GM12878 (cell line): ENCODE measurements at regions of chr14 and their contacts with region 1.

Region 1: DNA sequence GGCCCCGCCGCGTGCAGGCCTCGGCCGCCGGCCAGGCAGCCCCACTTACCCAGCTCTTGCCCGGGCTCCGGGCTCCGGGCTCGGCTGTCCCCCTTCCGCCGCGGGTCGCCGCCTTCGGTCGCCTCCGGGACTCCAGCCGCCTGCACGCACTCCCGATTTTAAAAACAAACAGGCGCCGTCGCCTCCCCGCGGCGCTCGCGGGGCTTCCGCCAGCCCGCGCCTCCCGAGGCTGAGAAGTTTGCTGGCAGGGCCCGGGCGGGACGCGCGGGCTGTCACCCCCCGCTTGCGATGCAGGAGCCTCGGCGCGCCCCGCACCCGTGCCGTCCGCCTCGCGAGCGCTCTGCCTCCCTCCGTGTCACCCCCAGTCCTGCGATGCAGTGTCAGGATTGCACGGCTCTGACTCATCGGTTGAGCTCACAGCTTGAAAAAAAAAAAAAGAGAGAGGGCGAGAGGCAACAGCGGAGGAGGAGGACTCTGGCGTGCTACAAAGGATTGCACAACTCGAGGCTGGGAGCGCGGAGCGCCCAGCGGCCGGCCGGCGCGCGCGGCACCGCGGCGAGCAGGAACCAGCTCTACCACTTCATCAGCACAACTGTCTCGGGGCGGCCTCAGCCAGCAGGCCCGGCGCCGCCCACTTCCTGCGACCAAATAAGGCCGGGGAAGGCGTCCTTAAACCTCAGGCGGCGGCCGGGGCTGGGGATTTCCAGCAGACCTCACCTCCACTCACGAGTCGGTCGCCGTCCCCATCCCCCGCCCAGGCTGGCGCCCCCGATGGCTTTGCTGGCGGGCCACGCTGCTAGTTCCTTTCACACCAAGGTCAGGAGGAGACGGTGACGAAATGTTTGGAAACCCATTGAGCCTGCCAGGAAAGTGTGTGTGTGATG is 45.8 kb upstream of the PNMA1 start:
- DNase-seq: peak; percentile 66
- ATAC-seq: peak; percentile 71
- H3K4me3 ChIP-seq: peak overlapping the region; percentile 83
- H3K27ac ChIP-seq: peak overlapping the region; percentile 100
- H3K4me1 ChIP-seq: peaks cover 63% of the 10 kb centered on the region
- H3K27me3 ChIP-seq: no peaks in the 10 kb centered on the region
- CTCF ChIP-seq: peak in 1 of 3 experiments; percentile 7; a peak in 1 of 6 replicates
- EP300 ChIP-seq: peak; percentile 48 to 58; a peak in 2 of 4 replicates
- POLR2A ChIP-seq: peak; percentile 97
- RAD21 ChIP-seq: no peak

Region 2: DNA sequence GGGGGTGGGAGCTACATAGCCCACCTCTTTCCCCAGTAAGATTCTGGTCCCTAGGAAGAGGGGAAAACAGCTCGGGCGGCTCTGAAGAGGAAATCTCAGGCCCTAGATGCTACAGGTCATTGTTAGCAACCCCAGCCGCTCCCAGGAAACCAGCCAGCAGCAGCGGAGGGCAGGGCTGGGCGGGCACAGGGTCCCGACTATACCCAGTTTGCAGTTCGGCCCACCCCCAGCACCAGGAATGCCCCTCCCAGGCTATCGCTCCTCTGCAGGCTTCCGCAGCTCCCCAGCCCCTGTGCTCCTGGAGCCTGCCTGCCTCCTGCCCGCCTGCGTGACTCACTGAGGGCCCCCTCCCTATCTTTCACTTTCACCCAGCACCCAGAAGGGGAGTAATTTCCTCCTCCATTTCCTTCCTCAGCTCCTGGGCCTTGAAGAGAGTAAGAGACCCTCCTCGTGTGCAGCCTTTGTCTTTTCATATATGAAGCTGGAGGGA is 18.5 kb before region 1 on chr14:
- CTCF ChIA-PET with region 1: interaction called, 95 read pairs
- POLR2A ChIA-PET with region 1: interaction called, 54 read pairs
- RAD21 ChIA-PET with region 1: interaction called, 114 read pairs
- SMC1A ChIA-PET with region 1: interaction called, 60 read pairs
- in situ Hi-C with region 1: no loop called
- intact Hi-C with region 1: no loop called
- DNase-seq: no peak
- ATAC-seq: peak; percentile 60
- H3K4me3 ChIP-seq: peak overlapping the region; percentile 55
- H3K27ac ChIP-seq: peak overlapping the region; percentile 81
- H3K4me1 ChIP-seq: peaks cover 55% of the 10 kb centered on the region
- H3K27me3 ChIP-seq: no peaks in the 10 kb centered on the region
- CTCF ChIP-seq: no peak
- EP300 ChIP-seq: no peak
- POLR2A ChIP-seq: no peak
- RAD21 ChIP-seq: no peak

Region 3: DNA sequence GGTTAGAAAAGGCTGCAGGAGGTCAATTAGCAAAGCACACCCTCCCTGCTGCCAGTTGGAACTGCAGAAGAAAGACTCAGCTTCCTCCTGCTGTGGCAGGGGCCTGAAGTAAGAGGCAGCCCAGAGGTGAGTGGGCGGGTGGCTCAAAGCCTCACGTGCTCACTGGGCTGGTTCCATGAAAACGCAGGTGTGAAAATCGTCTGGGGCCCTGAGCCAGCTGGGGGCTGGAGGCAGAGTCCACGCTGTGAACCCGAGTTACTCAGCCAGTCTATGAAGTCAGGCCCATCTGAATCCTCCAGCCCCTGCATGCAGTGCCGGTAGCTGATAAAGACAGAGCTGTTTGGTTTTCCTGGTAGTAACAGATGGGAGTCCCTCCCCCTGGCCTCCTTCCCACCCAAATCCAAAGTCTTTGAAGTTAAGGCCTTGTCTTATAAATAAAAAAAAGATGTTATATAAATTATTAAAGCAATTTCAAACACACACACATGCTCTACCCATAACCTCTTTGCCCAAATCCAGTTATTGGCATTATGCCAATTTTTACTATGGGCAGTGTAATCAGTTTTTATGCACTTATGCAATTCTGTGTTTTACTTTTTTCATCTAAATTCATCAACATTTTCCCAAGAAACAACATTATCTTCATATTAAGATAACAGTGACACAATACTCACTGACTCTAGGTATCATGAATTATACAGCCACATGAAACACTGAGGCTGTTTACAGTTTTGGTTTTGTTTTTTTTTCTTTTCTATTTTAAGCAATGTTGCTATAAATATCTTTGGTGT is 12.1 kb after region 1 on chr14:
- CTCF ChIA-PET with region 1: interaction called, 41 read pairs
- POLR2A ChIA-PET with region 1: interaction called, 255 read pairs
- RAD21 ChIA-PET with region 1: interaction called, 710 read pairs
- SMC1A ChIA-PET with region 1: interaction called, 214 read pairs
- in situ Hi-C with region 1: no loop called
- intact Hi-C with region 1: loop called (anchors 1 kb)
- DNase-seq: peak; percentile 85
- ATAC-seq: peak; percentile 76
- H3K4me3 ChIP-seq: peak overlapping the region; percentile 65; the same call in 1 of the 2 replicates
- H3K27ac ChIP-seq: peak overlapping the region; percentile 93
- H3K4me1 ChIP-seq: peaks cover 71% of the 10 kb centered on the region
- H3K27me3 ChIP-seq: no peaks in the 10 kb centered on the region
- CTCF ChIP-seq: peak in 2 of 3 experiments; percentile 0 to 16; a peak in 1 of 6 replicates
- EP300 ChIP-seq: peak; percentile 73 to 81; a peak in 3 of 4 replicates
- POLR2A ChIP-seq: peak; percentile 82
- RAD21 ChIP-seq: no peak

Region 4: GRCh38 chr14:73777401-73777800 is 17.4 kb after region 1 on chr14:
- CTCF ChIA-PET with region 1: interaction called, 41 read pairs
- POLR2A ChIA-PET with region 1: interaction called, 260 read pairs
- RAD21 ChIA-PET with region 1: interaction called, 710 read pairs
- SMC1A ChIA-PET with region 1: interaction called, 280 read pairs
- in situ Hi-C with region 1: no loop called
- intact Hi-C with region 1: no loop called
- DNase-seq: no peak
- ATAC-seq: peak; percentile 68
- H3K4me3 ChIP-seq: no peak overlapping the region
- H3K27ac ChIP-seq: no peak overlapping the region
- H3K4me1 ChIP-seq: peaks cover 68% of the 10 kb centered on the region
- H3K27me3 ChIP-seq: no peaks in the 10 kb centered on the region
- CTCF ChIP-seq: peak in 1 of 3 experiments; percentile 32; a peak in 2 of 6 replicates
- EP300 ChIP-seq: no peak
- POLR2A ChIP-seq: no peak
- RAD21 ChIP-seq: no peak

Region 5: DNA sequence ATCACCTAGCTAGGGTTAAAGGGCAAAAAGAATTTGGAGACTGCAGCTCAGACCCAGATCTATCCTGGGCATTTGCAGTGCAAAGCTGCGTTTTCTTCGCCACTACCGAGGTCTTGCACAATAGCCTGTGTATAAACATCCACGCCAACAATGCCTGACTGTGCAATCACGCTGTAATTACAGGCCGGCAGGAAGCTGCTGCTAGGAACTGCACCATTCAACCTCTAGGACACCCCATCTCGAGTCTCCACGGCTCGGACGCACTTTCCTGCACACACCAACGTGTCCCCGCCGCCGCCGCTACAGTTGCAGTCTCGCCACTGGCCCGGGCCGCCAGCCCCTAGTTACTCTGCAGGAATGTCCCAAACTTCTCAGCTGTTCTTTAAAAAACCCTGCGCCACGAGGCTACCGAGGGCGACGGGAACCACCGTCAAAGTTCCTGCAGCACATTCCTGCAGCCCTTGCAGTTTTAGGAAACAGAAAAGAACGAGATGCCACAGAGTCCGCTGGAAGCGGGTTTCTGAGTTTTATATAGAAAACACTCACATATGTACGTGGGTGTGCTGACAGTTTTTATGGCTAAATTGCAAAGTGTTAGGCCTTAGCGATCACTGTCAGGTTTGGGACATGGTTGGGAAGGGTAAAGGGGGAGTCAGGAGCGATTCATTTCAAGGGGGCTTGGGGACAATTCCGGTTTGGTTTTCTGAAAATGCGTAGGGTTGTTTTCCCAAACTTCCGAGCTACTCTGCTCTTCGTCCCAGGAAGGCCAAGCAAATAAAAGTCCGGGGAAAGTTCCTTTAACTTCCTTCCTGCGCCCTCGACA is 26.1 kb after region 1 on chr14:
- CTCF ChIA-PET with region 1: interaction called, 52 read pairs
- POLR2A ChIA-PET with region 1: interaction called, 260 read pairs
- RAD21 ChIA-PET with region 1: interaction called, 710 read pairs
- SMC1A ChIA-PET with region 1: interaction called, 280 read pairs
- in situ Hi-C with region 1: no loop called
- intact Hi-C with region 1: loop called (anchors 1 kb)
- DNase-seq: no peak
- ATAC-seq: peak; percentile 75
- H3K4me3 ChIP-seq: peak overlapping the region; percentile 97
- H3K27ac ChIP-seq: peak overlapping the region; percentile 94
- H3K4me1 ChIP-seq: peaks cover 41% of the 10 kb centered on the region
- H3K27me3 ChIP-seq: no peaks in the 10 kb centered on the region
- CTCF ChIP-seq: no peak
- EP300 ChIP-seq: no peak
- POLR2A ChIP-seq: peak; percentile 81
- RAD21 ChIP-seq: no peak

Region 6: GRCh38 chr14:75258615-75259466 is 1498.9 kb after region 1 on chr14:
- CTCF ChIA-PET with region 1: no interaction called
- POLR2A ChIA-PET with region 1: no interaction called
- RAD21 ChIA-PET with region 1: no interaction called
- SMC1A ChIA-PET with region 1: no interaction called
- in situ Hi-C with region 1: loop called (anchors 25 kb)
- intact Hi-C with region 1: no loop called
- DNase-seq: peak; percentile 96
- ATAC-seq: peak; percentile 96
- H3K4me3 ChIP-seq: peak overlapping the region; percentile 64; the same call in 1 of the 2 replicates
- H3K27ac ChIP-seq: peak overlapping the region; percentile 60
- H3K4me1 ChIP-seq: peaks cover 15% of the 10 kb centered on the region
- H3K27me3 ChIP-seq: peaks cover 0 to 4% of the 10 kb centered on the region in 2 experiments; a peak in 1 of 4 replicates
- CTCF ChIP-seq: no peak
- EP300 ChIP-seq: peak; percentile 80 to 98
- POLR2A ChIP-seq: no peak
- RAD21 ChIP-seq: no peak

Region 7: DNA sequence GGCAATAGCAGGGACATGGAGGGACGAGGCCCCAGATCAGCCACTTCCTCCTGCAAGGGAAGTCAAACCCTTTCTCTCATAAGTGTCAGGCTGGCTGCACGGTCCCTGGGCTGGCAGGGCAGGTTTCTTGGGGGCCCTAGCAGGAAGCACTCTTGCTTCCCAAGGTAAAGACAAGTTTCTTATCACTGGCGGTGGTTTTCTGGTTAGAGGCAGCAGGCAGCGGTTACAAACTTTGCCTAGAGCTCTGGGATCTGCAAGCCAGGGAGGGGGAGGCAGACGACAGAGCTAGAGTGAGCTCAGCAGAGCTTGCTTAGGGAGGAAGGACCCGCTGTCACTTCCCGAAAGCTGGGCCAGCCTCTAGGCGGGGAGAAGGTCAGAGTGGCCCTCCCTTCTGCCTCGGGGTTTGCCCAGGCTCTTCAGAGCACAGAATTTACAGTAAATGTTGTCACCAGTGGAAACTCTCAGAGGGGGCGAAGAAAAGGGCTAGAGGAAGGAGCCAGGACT is 1782.7 kb after region 1 on chr14:
- CTCF ChIA-PET with region 1: no interaction called
- POLR2A ChIA-PET with region 1: no interaction called
- RAD21 ChIA-PET with region 1: no interaction called
- SMC1A ChIA-PET with region 1: no interaction called
- in situ Hi-C with region 1: loop called (anchors 25 kb)
- intact Hi-C with region 1: no loop called
- DNase-seq: no peak
- ATAC-seq: peak; percentile 84
- H3K4me3 ChIP-seq: peak overlapping the region; percentile 52
- H3K27ac ChIP-seq: peak overlapping the region; percentile 96
- H3K4me1 ChIP-seq: peaks cover 60% of the 10 kb centered on the region
- H3K27me3 ChIP-seq: no peaks in the 10 kb centered on the region
- CTCF ChIP-seq: no peak
- EP300 ChIP-seq: no peak
- POLR2A ChIP-seq: peak; percentile 64
- RAD21 ChIP-seq: no peak